Activated CD4-positive, alpha-beta T cell treated with anti-CD3 and anti-CD28 coated beads for 36 hours (primary cell): ENCODE measurements at regions of chr6 and their contacts with region 1.

Region 1: GRCh38 chr6:30616811-30617564 is at the start of gene PPP1R10:
- DNase-seq: peak; percentile 99
- ATAC-seq: peak; percentile 77
- H3K4me3 Mint-ChIP-seq: peak within 1 kb of the TSS; percentile 97
- H3K27ac Mint-ChIP-seq: peak within 1 kb of the TSS; percentile 98
- H3K4me1 Mint-ChIP-seq: peaks cover 40% of the 10 kb centered on the region
- H3K27me3 Mint-ChIP-seq: no peaks in the 10 kb centered on the region
- total RNA-seq, gene PPP1R10: 75.6 to 100.0 TPM

Region 2: DNA sequence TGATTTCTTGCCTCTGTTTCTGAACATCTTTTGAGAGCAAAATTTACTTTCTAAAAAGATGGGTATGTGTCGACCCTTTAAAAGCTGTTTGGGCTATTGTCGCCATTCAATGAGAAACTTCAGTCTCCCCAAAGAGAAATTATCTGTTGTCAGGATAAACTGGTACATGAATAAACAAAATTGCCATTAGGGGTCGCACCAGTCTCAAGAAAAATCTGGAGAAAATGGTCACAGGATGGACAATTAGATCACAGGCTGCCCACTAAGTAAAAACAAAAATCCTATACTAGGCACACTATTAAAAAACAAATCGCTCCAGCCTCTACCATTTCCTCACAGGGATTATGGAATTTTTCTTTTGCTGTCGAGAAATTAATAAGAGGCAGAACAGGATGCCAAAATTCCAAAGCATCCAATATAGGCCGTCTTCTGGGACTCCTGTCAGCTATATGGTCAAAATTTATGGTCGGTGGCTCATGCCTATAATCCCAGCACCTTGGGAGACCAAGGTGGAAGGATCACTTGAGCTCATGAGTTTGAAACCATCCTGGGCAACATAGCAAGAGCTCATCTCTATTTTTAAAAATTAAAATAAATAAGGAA is 133.2 kb before region 1 on chr6:
- CTCF ChIA-PET with region 1: interaction called, 15 read pairs
- POLR2A ChIA-PET with region 1: interaction called, 5 read pairs
- intact Hi-C with region 1: loop called in 1 of 2 experiments (anchors 1 kb)
- DNase-seq: no peak
- ATAC-seq: no peak
- H3K4me3 Mint-ChIP-seq: no peak overlapping the region
- H3K27ac Mint-ChIP-seq: no peak overlapping the region
- H3K4me1 Mint-ChIP-seq: peaks cover 39% of the 10 kb centered on the region
- H3K27me3 Mint-ChIP-seq: peaks cover 28% of the 10 kb centered on the region

Region 3: GRCh38 chr6:30571075-30571768 is 45.8 kb before region 1 on chr6 and contains the start of gene ABCF1:
- CTCF ChIA-PET with region 1: interaction called, 3 read pairs
- POLR2A ChIA-PET with region 1: interaction called, 28 read pairs
- intact Hi-C with region 1: loop called (anchors 1 kb)
- DNase-seq: peak; percentile 100
- ATAC-seq: peak; percentile 86
- H3K4me3 Mint-ChIP-seq: peak within 1 kb of the TSS; percentile 94
- H3K27ac Mint-ChIP-seq: peak within 1 kb of the TSS; percentile 100
- H3K4me1 Mint-ChIP-seq: peaks cover 62% of the 10 kb centered on the region
- H3K27me3 Mint-ChIP-seq: no peaks in the 10 kb centered on the region
- total RNA-seq, gene ABCF1: 100.0 to 105 TPM

Region 4: DNA sequence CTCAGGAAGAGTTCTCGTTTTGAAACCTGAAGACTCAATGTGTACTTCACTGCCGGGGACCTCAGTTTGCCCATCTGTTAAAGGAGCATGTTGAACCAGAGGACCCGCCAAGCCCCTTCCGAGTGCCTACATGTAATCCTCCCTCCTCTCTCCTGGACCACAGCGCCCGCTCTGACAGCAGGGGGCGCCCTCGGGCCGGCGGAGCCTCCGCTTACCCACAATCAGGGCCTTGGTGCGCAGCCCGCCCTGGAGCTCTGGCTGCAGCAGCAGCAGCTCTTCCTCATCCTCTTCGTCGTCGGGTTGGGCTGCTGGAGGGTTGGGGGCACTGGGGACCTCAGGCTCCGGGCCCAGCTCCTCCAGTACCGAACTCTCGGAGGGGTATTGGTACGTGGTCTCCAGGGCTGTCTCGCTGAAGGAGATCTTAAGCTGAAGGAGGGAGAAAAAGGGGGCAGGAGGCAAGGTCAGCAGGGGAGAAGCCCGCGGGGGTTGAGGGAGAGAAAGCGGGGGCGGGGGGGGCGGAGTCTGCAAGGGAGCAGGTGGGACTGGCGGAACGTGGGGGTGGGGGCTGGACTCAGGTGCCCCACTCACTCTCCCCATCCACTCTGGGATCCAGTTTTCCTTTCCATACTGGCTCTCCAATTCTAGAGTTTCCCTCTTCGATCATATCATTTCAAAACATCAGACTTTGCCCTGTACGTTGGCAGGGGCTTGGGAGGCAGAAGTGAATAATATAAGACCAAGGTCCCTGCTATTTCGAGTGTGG is 62.2 kb after region 1 on chr6:
- CTCF ChIA-PET with region 1: interaction called, 7 read pairs
- POLR2A ChIA-PET with region 1: no interaction called
- intact Hi-C with region 1: loop called (anchors 1 kb)
- DNase-seq: peak; percentile 96
- ATAC-seq: peak; percentile 37
- H3K4me3 Mint-ChIP-seq: peak overlapping the region; percentile 100
- H3K27ac Mint-ChIP-seq: peak overlapping the region; percentile 97
- H3K4me1 Mint-ChIP-seq: peaks cover 23% of the 10 kb centered on the region
- H3K27me3 Mint-ChIP-seq: no peaks in the 10 kb centered on the region

Region 5: GRCh38 chr6:30800871-30801270 is 183.9 kb after region 1 on chr6:
- CTCF ChIA-PET with region 1: no interaction called
- POLR2A ChIA-PET with region 1: no interaction called
- intact Hi-C with region 1: no loop called
- DNase-seq: no peak
- ATAC-seq: no peak
- H3K4me3 Mint-ChIP-seq: no peak overlapping the region
- H3K27ac Mint-ChIP-seq: no peak overlapping the region
- H3K4me1 Mint-ChIP-seq: peaks cover 27% of the 10 kb centered on the region
- H3K27me3 Mint-ChIP-seq: no peaks in the 10 kb centered on the region

Region 6: GRCh38 chr6:30814136-30815040 is 197.4 kb after region 1 on chr6:
- CTCF ChIA-PET with region 1: interaction called, 3 read pairs
- POLR2A ChIA-PET with region 1: interaction called, 3 read pairs
- intact Hi-C with region 1: loop called (anchors 2 to 5 kb)
- DNase-seq: peak; percentile 79
- ATAC-seq: peak; percentile 40
- H3K4me3 Mint-ChIP-seq: peak overlapping the region; percentile 38
- H3K27ac Mint-ChIP-seq: peak overlapping the region; percentile 96
- H3K4me1 Mint-ChIP-seq: peaks cover 91% of the 10 kb centered on the region
- H3K27me3 Mint-ChIP-seq: no peaks in the 10 kb centered on the region

Region 7: DNA sequence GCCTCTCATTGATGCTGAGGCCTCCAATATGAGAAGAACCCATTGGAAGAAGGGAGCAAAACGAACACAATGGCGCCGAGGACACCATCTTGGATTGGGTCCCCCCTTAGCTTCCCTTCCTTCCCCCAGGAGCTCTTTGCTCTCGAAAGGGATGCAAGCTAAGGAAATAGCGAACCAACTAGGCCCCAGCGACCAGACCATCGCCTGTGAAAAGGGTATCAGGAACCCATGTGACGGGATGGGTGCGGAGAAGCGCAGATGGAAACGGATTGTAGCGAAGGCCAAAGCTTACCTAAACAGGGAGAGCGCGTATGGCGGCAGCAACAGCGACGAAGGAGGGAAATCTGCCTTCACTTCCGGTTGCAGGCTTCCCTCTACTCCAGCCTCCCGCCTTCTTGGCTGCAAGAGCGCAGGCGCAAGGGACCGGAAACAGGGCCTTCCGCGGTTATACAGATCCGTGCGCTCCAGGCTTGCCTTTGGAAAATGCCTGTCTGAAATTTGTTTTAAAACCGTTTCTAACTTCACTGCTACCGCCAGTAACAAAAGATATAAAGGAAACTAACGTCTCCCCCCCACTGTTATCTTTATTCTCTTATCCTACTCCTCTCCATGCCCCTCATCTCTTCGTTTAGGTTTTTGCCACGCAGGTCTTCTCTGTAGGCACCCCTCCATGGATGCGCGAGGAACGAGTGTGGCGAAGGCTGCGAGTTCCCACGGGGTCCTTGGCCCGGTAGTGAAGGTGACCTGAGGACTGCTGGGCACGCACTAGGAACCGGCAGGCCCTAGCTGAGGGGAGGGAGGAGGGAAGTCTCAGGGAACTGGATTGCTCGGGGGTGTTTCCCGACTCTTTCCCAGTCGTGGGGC is 924.9 kb after region 1 on chr6 and contains the start of gene DDX39B:
- CTCF ChIA-PET with region 1: no interaction called
- POLR2A ChIA-PET with region 1: interaction called, 4 read pairs
- intact Hi-C with region 1: loop called in 1 of 2 experiments (anchors 10 kb)
- DNase-seq: peak; percentile 96
- ATAC-seq: peak; percentile 77
- H3K4me3 Mint-ChIP-seq: peak within 1 kb of the TSS; percentile 79
- H3K27ac Mint-ChIP-seq: peak within 1 kb of the TSS; percentile 92
- H3K4me1 Mint-ChIP-seq: peaks cover 50% of the 10 kb centered on the region
- H3K27me3 Mint-ChIP-seq: no peaks in the 10 kb centered on the region
- total RNA-seq, gene DDX39B: 517 to 569 TPM